Caco-2 (cell line): ENCODE measurements at regions of chr1 and their contacts with region 1.

Region 1: DNA sequence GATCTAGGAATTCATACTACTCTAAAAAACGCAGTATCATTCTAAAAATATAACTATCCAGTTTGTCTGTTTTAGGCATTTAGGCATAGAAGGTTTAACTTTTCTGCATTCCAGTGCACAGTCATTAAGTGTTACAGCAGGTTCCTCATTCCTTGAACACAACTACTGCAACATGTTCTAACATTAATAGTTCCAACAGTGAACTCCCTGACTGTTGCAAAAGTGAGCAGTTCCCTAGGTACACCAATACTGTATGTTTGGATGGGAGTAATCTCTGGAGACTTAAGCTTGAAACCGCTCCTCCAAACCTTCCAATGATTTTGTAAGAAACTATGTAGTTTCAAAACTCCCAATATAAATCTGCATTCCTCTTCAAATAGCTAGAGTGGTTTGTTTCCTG is 46.2 kb downstream of the UCHL5 start:
- DNase-seq: no peak
- H3K4me3 ChIP-seq: no peak overlapping the region
- H3K4me3 Mint-ChIP-seq: no peak overlapping the region
- H3K27ac Mint-ChIP-seq: no peak overlapping the region
- H3K4me1 ChIP-seq: peaks cover 19% of the 10 kb centered on the region
- H3K4me1 Mint-ChIP-seq: peaks cover 9% of the 10 kb centered on the region
- H3K27me3 ChIP-seq: no peaks in the 10 kb centered on the region
- H3K27me3 Mint-ChIP-seq: no peaks in the 10 kb centered on the region
- CTCF ChIP-seq: no peak

Region 2: GRCh38 chr1:192639607-192640368 is 373.2 kb before region 1 on chr1:
- CTCF ChIA-PET with region 1: no interaction called
- POLR2A ChIA-PET with region 1: no interaction called
- intact Hi-C with region 1: loop called (anchors 10 kb)
- DNase-seq: peak in 1 of 2 experiments; percentile 11
- H3K4me3 ChIP-seq: no peak overlapping the region
- H3K4me3 Mint-ChIP-seq: no peak overlapping the region
- H3K27ac Mint-ChIP-seq: peak overlapping the region; percentile 6
- H3K4me1 ChIP-seq: peaks cover 20% of the 10 kb centered on the region
- H3K4me1 Mint-ChIP-seq: no peaks in the 10 kb centered on the region
- H3K27me3 ChIP-seq: no peaks in the 10 kb centered on the region
- H3K27me3 Mint-ChIP-seq: no peaks in the 10 kb centered on the region
- CTCF ChIP-seq: no peak

Region 3: DNA sequence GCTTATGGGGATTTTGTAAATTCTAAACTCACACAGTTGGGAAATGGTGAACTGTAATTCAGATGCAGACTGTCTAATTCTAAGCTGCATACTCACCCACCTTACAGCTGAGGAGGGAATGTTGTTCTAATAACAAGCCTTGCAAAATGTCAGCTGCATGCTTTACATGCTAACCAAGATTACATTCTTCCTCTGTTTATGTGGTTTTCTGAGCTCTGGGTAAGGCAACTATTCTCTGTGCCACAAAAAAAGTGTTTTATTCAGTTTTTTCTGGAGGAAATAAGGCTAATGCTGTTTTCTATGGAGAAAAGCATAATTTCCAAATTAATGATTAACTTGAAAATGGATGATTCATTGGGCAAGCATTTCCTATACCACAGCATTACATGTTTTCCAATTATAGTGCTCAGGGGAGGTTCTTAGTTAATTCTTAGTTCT is 312.2 kb before region 1 on chr1:
- CTCF ChIA-PET with region 1: no interaction called
- POLR2A ChIA-PET with region 1: no interaction called
- intact Hi-C with region 1: loop called (anchors 5 kb)
- DNase-seq: peak in 1 of 2 experiments; percentile 9
- H3K4me3 ChIP-seq: no peak overlapping the region
- H3K4me3 Mint-ChIP-seq: peak overlapping the region; percentile 19
- H3K27ac Mint-ChIP-seq: no peak overlapping the region
- H3K4me1 ChIP-seq: peaks cover 34% of the 10 kb centered on the region
- H3K4me1 Mint-ChIP-seq: no peaks in the 10 kb centered on the region
- H3K27me3 ChIP-seq: no peaks in the 10 kb centered on the region
- H3K27me3 Mint-ChIP-seq: no peaks in the 10 kb centered on the region
- CTCF ChIP-seq: no peak

Region 4: DNA sequence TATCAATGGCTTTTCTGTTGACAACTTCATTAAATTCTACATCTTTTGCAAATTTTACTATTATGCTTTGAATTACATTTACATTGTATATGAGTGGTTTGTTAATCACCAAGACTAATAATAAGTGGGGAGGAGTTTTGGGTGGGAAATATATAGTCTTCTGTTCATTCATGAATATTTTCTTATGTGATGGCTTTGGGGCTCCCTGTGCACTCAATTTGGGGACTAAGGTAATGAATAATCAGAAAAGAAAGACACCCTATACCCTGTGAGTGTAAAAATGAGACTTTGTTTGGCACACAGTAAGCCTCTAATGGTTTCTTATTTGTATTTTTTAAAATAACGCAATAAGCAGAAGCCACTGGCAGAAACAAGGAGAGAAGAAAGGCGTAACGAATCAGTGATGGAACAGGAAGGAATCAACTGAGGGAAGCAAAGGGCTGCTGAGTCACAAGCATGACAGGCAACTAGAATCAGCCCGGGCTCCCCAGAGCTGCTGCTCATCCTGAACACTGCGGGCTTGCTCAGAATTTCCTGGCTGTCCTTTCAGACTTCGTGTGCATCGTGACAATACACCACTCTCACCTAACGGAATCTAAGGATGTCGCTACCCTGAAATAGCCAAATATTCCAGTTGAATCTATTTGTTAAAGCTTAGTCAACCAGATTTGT is 225.0 kb before region 1 on chr1:
- CTCF ChIA-PET with region 1: no interaction called
- POLR2A ChIA-PET with region 1: no interaction called
- intact Hi-C with region 1: no loop called
- DNase-seq: no peak
- H3K4me3 ChIP-seq: no peak overlapping the region
- H3K4me3 Mint-ChIP-seq: no peak overlapping the region
- H3K27ac Mint-ChIP-seq: no peak overlapping the region
- H3K4me1 ChIP-seq: no peaks in the 10 kb centered on the region
- H3K4me1 Mint-ChIP-seq: no peaks in the 10 kb centered on the region
- H3K27me3 ChIP-seq: no peaks in the 10 kb centered on the region
- H3K27me3 Mint-ChIP-seq: no peaks in the 10 kb centered on the region
- CTCF ChIP-seq: no peak

Region 5: GRCh38 chr1:192939440-192939839 is 73.6 kb before region 1 on chr1:
- CTCF ChIA-PET with region 1: no interaction called
- POLR2A ChIA-PET with region 1: no interaction called
- intact Hi-C with region 1: loop called (anchors 1 kb)
- DNase-seq: peak in 1 of 2 experiments; percentile 9
- H3K4me3 ChIP-seq: no peak overlapping the region
- H3K4me3 Mint-ChIP-seq: no peak overlapping the region
- H3K27ac Mint-ChIP-seq: no peak overlapping the region
- H3K4me1 ChIP-seq: peaks cover 7% of the 10 kb centered on the region
- H3K4me1 Mint-ChIP-seq: peaks cover 5% of the 10 kb centered on the region
- H3K27me3 ChIP-seq: no peaks in the 10 kb centered on the region
- H3K27me3 Mint-ChIP-seq: no peaks in the 10 kb centered on the region
- CTCF ChIP-seq: no peak

Region 6: DNA sequence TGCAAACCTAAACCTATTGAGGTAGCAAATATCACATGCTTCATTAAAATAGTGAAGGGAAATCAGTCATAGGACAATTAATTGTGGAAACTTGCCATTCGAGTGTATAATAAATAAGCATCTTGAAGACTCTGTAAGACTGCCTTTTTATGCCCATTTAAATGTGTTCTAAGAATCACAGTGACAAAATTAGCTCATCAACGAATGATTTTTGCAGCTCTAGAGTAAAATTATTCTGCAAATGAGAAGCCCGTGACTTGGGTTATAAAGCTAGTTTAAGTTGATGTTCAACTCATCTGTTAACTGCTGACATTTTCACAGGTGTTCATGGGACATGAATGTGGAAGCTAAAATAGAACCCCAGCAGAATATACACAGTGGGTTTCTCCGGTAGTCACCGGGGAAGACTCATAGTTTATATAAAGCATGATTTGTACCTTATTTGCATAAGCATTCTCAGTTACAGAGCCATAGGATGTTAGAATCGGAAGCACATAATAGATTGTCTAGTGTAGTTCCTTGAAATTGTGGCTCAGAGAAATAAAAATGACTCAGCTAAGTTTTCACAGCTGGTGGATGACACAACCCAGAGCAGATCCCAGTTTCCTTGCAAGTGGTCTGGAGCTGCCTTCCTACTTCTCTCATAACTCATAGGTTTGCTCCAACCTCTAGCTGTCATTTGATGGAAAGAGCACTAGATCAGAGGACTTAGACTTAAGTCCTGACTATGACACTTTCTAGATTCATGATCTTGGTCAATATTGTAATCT is 61.1 kb before region 1 on chr1:
- CTCF ChIA-PET with region 1: no interaction called
- POLR2A ChIA-PET with region 1: no interaction called
- intact Hi-C with region 1: loop called (anchors 5 kb)
- DNase-seq: no peak
- H3K4me3 ChIP-seq: no peak overlapping the region
- H3K4me3 Mint-ChIP-seq: no peak overlapping the region
- H3K27ac Mint-ChIP-seq: no peak overlapping the region
- H3K4me1 ChIP-seq: no peaks in the 10 kb centered on the region
- H3K4me1 Mint-ChIP-seq: peaks cover 5% of the 10 kb centered on the region
- H3K27me3 ChIP-seq: no peaks in the 10 kb centered on the region
- H3K27me3 Mint-ChIP-seq: no peaks in the 10 kb centered on the region
- CTCF ChIP-seq: no peak

Region 7: DNA sequence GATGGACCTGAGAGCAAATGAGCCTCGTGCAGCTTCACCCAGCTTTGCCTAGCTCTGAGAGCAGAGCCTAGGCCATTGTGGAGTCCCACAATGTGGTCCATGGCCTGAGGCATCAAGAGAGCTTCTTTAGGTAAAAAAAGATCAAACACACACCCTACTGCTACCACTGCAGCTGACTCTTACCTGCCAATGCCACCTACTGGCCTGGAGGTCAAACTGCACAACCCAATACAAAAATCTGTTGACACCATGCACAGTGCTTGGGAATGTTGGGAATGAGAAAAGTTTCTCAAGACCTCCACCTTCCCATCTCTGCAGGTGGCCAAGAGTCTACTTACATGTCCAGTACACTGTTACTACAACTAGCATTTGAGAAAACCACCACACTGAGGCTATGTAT is 14.5 kb before region 1 on chr1:
- CTCF ChIA-PET with region 1: no interaction called
- POLR2A ChIA-PET with region 1: no interaction called
- intact Hi-C with region 1: loop called (anchors 1 kb)
- DNase-seq: peak in 1 of 2 experiments; percentile 22
- H3K4me3 ChIP-seq: no peak overlapping the region
- H3K4me3 Mint-ChIP-seq: no peak overlapping the region
- H3K27ac Mint-ChIP-seq: no peak overlapping the region
- H3K4me1 ChIP-seq: 0 out of 2 replicates have a peak, but pooled peaks cover 2% of the 10 kb centered on the region
- H3K4me1 Mint-ChIP-seq: no peaks in the 10 kb centered on the region
- H3K27me3 ChIP-seq: no peaks in the 10 kb centered on the region
- H3K27me3 Mint-ChIP-seq: no peaks in the 10 kb centered on the region
- CTCF ChIP-seq: peak; percentile 20 to 39

Region 8: GRCh38 chr1:193059268-193060225 is 46.5 kb after region 1 on chr1 and contains the starts of genes RO60 and UCHL5:
- CTCF ChIA-PET with region 1: no interaction called
- POLR2A ChIA-PET with region 1: no interaction called
- intact Hi-C with region 1: loop called (anchors 2 kb)
- DNase-seq: peak; percentile 96 to 98
- H3K4me3 ChIP-seq: peak within 1 kb of the TSS; percentile 70
- H3K4me3 Mint-ChIP-seq: peak within 1 kb of the TSS; percentile 90
- H3K27ac Mint-ChIP-seq: peak within 1 kb of the TSS; percentile 91
- H3K4me1 ChIP-seq: peaks cover 5% of the 10 kb centered on the region; the same call in 1 of the 2 replicates
- H3K4me1 Mint-ChIP-seq: peaks cover 15% of the 10 kb centered on the region
- H3K27me3 ChIP-seq: no peaks in the 10 kb centered on the region
- H3K27me3 Mint-ChIP-seq: no peaks in the 10 kb centered on the region
- CTCF ChIP-seq: peak in 1 of 2 experiments; percentile 21
- total RNA-seq, gene RO60: 49.2 and 50.0 TPM in 2 replicates
- total RNA-seq, gene UCHL5: 49.6 and 49.9 TPM in 2 replicates